Astrocyte of the spinal cord (primary cell): ENCODE measurements at regions of chr7 and their contacts with region 1.

Region 1: GRCh38 chr7:157490457-157490912 is 153.7 kb downstream of the DNAJB6 start:
- DNase-seq: peak; percentile 68
- H3K4me3 ChIP-seq: no peak overlapping the region
- CTCF ChIP-seq: no peak

Region 2: GRCh38 chr7:157336383-157337315 is 153.8 kb before region 1 on chr7 and contains the start of gene DNAJB6:
- in situ Hi-C with region 1: no loop called
- DNase-seq: peak; percentile 94
- H3K4me3 ChIP-seq: peak within 1 kb of the TSS; percentile 89
- CTCF ChIP-seq: no peak

Region 3: DNA sequence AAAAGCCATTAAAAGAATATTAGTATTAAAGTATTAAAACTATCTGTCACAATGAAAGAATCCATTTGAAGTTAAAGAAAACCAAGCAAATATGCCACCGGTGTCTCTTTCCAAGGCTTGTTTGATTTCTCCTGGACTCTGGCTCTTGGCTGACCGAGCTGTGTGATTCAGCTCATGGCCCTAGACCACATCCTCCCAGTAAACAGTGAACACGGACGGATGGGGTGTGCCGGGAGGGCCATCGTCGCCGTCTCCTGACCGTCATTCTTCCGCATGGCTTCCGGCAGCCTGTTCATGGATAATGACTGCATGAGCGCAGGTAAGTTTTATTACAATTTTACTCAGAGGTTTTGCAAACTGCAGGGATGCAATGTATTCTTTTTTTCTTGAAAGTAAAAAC is 64.8 kb after region 1 on chr7:
- in situ Hi-C with region 1: loop called (anchors 10 kb)
- DNase-seq: peak; percentile 66
- H3K4me3 ChIP-seq: no peak overlapping the region
- CTCF ChIP-seq: no peak

Region 4: GRCh38 chr7:157585113-157585861 is 94.8 kb after region 1 on chr7:
- in situ Hi-C with region 1: no loop called
- DNase-seq: no peak
- H3K4me3 ChIP-seq: no peak overlapping the region
- CTCF ChIP-seq: no peak

Region 5: GRCh38 chr7:157645539-157645938 is 155.1 kb after region 1 on chr7:
- in situ Hi-C with region 1: no loop called
- DNase-seq: no peak
- H3K4me3 ChIP-seq: no peak overlapping the region
- CTCF ChIP-seq: no peak